B cell (primary cell): ENCODE measurements at regions of chr2 and their contacts with region 1.

Region 1: DNA sequence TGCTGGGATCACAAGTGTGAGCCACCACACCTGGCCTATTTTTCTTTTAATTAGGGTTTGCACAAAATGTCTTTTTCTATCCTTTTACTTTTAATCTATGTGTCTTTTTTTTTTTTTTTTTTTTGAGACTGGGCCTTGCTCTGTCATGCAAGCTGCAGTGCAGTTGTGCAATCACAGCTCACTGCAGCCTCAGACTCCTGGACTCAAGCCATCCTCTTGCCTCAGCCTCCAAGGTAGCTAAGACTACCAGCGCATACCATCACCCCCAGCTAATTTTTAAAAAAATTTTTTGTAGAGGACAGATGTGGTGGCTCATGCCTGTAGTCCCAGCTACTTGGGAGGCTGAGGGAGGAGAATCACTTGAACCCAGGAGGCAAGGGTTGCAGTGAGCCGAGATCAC is 27.1 kb downstream of the ADCY3 start:
- DNase-seq: no peak
- ATAC-seq: no peak
- H3K4me3 ChIP-seq: no peak overlapping the region
- H3K4me3 Mint-ChIP-seq: no peak overlapping the region
- H3K27ac ChIP-seq: no peak overlapping the region
- H3K27ac Mint-ChIP-seq: no peak overlapping the region
- H3K4me1 ChIP-seq: no peaks in the 10 kb centered on the region
- H3K4me1 Mint-ChIP-seq: peaks cover 9% of the 10 kb centered on the region
- H3K27me3 ChIP-seq: no peaks in the 10 kb centered on the region
- H3K27me3 Mint-ChIP-seq: no peaks in the 10 kb centered on the region
- CTCF ChIP-seq: no peak

Region 2: GRCh38 chr2:24482251-24482971 is 410.5 kb before region 1 on chr2:
- CTCF ChIA-PET with region 1: no interaction called
- POLR2A ChIA-PET with region 1: no interaction called
- intact Hi-C with region 1: no loop called
- DNase-seq: no peak
- ATAC-seq: no peak
- H3K4me3 ChIP-seq: no peak overlapping the region
- H3K4me3 Mint-ChIP-seq: no peak overlapping the region
- H3K27ac ChIP-seq: no peak overlapping the region
- H3K27ac Mint-ChIP-seq: no peak overlapping the region
- H3K4me1 ChIP-seq: no peaks in the 10 kb centered on the region
- H3K4me1 Mint-ChIP-seq: no peaks in the 10 kb centered on the region
- H3K27me3 ChIP-seq: peaks cover 0 to 4% (median 0%) of the 10 kb centered on the region in 4 experiments
- H3K27me3 Mint-ChIP-seq: peaks cover 10% of the 10 kb centered on the region
- CTCF ChIP-seq: no peak

Region 3: DNA sequence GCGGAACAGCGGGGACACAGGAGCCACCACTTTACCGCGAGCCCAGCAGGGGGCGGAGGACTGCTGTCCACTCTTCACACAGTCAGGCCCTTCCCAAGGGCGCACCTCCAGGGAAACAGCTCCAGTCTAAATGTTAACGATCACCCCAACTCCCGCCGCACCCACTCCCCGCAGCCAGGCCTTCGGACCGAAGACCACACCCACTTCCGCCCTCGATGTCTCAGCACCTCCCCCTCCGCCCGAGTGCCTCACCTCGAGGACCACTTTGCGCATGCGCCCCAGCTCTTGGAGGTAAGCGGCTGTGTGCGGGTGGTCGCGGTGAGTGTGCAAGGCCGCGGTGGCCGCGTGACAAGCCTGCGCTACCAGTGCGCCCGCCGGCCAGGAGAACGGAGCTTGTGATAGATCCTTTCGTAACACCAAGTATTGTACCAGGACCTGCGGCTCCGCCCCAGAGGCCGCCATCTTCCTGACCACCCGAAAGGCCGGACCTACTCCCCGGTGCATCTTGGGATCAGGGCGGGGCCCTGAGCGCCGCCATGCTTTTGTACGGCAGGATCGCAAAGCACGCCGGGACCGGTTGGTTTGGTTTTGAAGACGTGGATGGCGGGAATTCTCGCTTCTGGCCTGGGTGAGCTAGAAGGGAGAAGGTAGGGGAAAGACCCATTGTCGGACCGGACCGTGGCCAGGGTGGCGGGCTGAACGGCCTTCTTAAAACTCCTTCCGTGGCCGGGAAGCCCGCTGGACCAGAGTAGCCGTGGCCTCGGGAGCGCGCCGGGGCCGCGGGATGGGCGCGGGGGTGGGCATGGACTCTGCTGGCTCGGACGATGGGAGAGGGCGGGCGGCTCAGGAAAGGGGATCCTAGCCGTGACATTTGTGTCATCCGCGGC is 99.8 kb before region 1 on chr2 and contains the starts of genes CENPO and PTRHD1:
- CTCF ChIA-PET with region 1: no interaction called
- POLR2A ChIA-PET with region 1: interaction called, 11 read pairs
- intact Hi-C with region 1: no loop called
- DNase-seq: peak; percentile 99
- ATAC-seq: peak; percentile 96
- H3K4me3 ChIP-seq: peak within 1 kb of the TSS; percentile 51 to 91 (median 82)
- H3K4me3 Mint-ChIP-seq: peak within 1 kb of the TSS; percentile 99
- H3K27ac ChIP-seq: peak within 1 kb of the TSS; percentile 84 to 87
- H3K27ac Mint-ChIP-seq: peak within 1 kb of the TSS; percentile 100
- H3K4me1 ChIP-seq: peaks cover 10 to 16% of the 10 kb centered on the region in 2 donors
- H3K4me1 Mint-ChIP-seq: peaks cover 19% of the 10 kb centered on the region
- H3K27me3 ChIP-seq: no peaks in the 10 kb centered on the region
- H3K27me3 Mint-ChIP-seq: no peaks in the 10 kb centered on the region
- CTCF ChIP-seq: peak; percentile 68
- total RNA-seq, gene CENPO: 10.4 and 10.8 TPM in 2 replicates
- total RNA-seq, gene PTRHD1: 20.2 and 20.4 TPM in 2 replicates

Region 4: DNA sequence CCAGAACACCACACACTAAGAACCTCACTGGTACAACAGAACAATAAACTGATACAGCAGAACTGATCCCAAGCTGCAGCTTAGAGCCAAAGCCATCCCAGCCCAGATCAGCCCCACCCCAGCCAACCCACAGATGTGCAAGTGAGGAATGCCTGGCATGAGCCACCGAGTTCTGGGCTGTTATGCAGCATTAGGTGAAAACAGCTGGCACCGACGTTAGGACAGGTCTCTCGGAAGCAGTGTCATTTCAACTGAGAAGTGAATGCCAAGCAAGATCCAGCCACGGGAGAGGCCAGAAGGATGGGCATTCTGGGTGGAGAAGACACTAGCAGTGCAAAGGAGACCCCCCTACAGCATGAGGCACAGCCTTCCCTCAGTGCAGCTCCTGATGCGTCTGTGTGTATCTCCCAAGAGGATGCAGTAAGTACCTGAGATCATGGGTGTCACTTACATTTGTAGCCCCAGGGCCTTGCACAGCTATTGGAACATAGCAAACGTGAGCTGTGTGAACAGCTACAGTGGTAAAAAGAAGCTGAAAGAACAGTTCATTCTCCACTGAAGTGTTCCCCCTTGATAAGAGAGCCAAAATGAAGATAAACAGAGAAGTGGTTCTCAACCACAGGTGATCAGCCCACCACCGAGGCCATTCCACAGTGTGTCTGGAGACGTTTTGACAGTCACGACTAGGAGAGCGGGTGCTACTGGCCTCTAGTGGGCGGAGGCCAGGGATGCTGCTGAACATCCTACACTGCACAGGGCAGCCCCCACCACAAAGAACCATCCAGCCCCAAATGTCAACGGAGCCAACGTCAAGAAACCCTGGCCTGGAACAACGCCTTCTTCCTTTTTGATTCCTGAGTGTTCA is 11.5 kb before region 1 on chr2:
- CTCF ChIA-PET with region 1: no interaction called
- POLR2A ChIA-PET with region 1: no interaction called
- intact Hi-C with region 1: no loop called
- DNase-seq: no peak
- ATAC-seq: no peak
- H3K4me3 ChIP-seq: no peak overlapping the region
- H3K4me3 Mint-ChIP-seq: no peak overlapping the region
- H3K27ac ChIP-seq: no peak overlapping the region
- H3K27ac Mint-ChIP-seq: peak overlapping the region; percentile 44
- H3K4me1 ChIP-seq: peaks cover 14 to 25% of the 10 kb centered on the region in 2 donors
- H3K4me1 Mint-ChIP-seq: peaks cover 54% of the 10 kb centered on the region
- H3K27me3 ChIP-seq: no peaks in the 10 kb centered on the region
- H3K27me3 Mint-ChIP-seq: no peaks in the 10 kb centered on the region
- CTCF ChIP-seq: no peak

Region 5: DNA sequence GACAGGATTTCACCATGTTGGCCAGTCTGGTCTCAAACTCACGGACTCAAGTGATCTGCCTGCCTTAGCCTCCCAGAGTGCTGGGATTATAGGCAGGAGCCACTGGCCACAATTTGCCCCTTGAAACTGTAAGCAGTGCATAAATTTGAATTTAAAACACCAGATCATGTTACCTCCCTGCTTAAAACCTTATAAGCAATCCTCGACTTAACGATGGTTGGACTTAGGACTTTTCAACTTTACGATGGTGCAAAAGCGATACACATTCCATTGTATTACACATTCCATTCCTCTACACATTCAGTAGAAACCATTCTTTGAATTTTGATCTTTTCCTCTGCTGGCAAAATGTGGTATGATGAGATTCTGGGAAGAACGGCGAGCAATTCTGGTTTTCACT is 125.8 kb after region 1 on chr2:
- CTCF ChIA-PET with region 1: no interaction called
- POLR2A ChIA-PET with region 1: no interaction called
- intact Hi-C with region 1: no loop called
- DNase-seq: no peak
- ATAC-seq: no peak
- H3K4me3 ChIP-seq: no peak overlapping the region
- H3K4me3 Mint-ChIP-seq: no peak overlapping the region
- H3K27ac ChIP-seq: no peak overlapping the region
- H3K27ac Mint-ChIP-seq: no peak overlapping the region
- H3K4me1 ChIP-seq: no peaks in the 10 kb centered on the region
- H3K4me1 Mint-ChIP-seq: peaks cover 3% of the 10 kb centered on the region
- H3K27me3 ChIP-seq: no peaks in the 10 kb centered on the region
- H3K27me3 Mint-ChIP-seq: no peaks in the 10 kb centered on the region
- CTCF ChIP-seq: no peak